AG04450 (cell line): ENCODE measurements at regions of chr17 and their contacts with region 1.

Region 1: DNA sequence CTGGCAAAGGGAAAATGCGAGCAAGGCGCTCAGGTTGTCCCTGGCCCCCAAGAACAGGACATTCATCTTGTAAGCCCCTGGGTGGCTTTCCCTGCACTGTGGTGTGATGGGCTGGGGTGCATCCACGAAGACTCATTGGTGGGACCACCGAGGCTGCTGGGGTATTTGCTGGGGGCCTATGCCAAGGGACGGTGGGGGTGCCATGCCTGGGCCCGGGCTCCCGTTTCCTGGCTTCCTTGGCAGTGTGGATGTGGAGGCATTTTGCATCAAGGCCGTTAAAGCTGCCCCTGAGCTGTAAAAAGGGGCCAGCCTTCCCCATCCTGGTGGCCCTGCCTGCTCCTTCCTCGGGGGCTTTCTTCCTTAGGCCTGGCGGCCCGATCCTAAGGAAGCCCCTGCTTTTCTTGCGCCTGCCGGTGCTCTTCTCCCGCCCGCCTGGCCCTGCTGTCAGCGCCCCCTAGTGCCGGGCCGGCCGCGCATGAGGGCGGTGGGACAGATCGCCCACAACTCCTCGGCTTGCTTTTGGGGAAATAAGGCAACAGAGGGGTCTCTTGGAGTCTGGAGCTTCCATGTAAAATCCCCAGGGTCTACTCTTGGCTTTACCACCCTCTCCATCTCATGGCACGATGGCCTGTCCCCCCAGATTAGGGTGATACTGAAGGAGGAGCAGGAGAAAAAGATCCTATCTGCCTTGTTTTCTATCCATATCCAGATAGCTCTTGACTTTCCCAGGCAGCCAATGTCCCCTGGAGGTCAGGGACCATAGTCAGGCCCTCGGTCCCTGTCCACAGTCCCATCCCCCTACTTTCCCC is 9.8 kb upstream of the TBX2 start:
- DNase-seq: no peak
- H3K4me3 ChIP-seq: no peak overlapping the region
- H3K27ac ChIP-seq: peak overlapping the region; percentile 31
- H3K27me3 ChIP-seq: no peaks in the 10 kb centered on the region
- CTCF ChIP-seq: peak; percentile 95

Region 2: GRCh38 chr17:61002316-61002736 is 387.5 kb before region 1 on chr17:
- CTCF ChIA-PET with region 1: interaction called, 16 read pairs
- POLR2A ChIA-PET with region 1: no interaction called
- DNase-seq: peak; percentile 27
- H3K4me3 ChIP-seq: no peak overlapping the region
- H3K27ac ChIP-seq: no peak overlapping the region
- H3K27me3 ChIP-seq: no peaks in the 10 kb centered on the region
- CTCF ChIP-seq: peak; percentile 60

Region 3: DNA sequence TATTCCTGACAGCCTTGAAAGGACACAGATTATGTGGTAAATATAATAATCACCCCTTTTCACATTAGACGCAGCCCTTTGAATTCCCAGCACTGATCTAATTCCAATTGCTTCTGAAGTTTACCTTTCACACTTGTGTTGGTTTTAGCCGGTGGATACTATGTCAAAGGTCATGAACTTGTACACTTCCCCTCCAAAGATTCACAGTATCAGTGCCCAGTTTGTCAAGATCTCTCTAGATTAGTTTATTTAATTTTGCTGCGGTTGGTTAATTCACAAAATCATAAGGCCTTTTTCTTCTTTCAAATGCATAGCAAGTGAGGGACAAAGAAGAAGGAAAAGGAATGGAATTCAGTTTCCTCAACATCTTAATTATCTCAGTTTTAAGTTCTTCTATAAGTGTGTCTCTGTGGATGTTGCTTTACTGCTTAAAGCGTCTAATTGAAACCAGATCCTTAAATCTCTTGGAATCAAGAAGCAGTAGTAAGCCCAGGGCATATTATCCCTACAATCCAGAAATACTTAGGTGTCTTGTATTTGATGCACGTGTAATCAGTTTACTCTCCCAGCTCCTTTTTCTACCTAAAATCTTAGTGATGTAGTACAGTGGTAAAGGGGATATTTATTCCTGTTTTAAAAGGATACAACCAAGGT is 164.5 kb before region 1 on chr17:
- CTCF ChIA-PET with region 1: no interaction called
- POLR2A ChIA-PET with region 1: no interaction called
- DNase-seq: no peak
- H3K4me3 ChIP-seq: no peak overlapping the region
- H3K27ac ChIP-seq: no peak overlapping the region
- H3K27me3 ChIP-seq: no peaks in the 10 kb centered on the region
- CTCF ChIP-seq: no peak

Region 4: GRCh38 chr17:61314368-61315078 is 75.4 kb before region 1 on chr17:
- CTCF ChIA-PET with region 1: interaction called, 11 read pairs
- POLR2A ChIA-PET with region 1: no interaction called
- DNase-seq: no peak
- H3K4me3 ChIP-seq: no peak overlapping the region
- H3K27ac ChIP-seq: peak overlapping the region; percentile 59
- H3K27me3 ChIP-seq: no peaks in the 10 kb centered on the region
- CTCF ChIP-seq: peak; percentile 50